ENCODE measurements at regions of chr3 and their contacts with region 1.

Region 1: DNA sequence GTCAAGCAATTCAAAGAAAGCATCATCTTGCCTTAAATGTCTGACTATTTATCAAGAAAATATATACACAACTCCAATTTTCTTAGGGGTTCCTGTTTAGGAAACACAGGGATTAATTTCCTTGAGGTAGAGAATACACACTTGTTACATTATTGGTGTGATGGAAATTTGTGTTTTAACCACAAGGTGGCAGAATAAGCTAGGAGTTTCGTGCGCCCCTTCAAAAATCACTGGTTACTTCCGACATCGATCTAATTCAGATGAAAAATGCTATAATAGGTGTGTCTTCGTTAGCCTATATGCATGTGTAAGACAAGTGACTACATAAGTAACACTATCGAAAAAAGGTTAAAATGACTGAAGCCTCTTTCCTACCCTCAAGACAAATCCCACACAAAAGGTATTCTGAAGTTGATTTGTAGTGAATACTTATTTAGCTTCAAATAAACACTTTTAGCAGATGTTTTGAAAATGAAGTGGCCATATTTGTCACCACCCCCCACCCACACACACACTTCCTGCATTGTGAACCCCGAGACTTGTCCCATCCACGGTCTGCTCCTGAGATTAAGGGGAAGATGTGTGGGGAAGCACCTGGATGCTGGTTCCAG is 246.5 kb downstream of the ROBO1 start:
- DNase-seq: peak in 1 of 7 donors; percentile 3
- H3K4me3 ChIP-seq: no peak overlapping the region
- H3K27ac ChIP-seq: no peak overlapping the region
- H3K4me1 ChIP-seq: no peaks in the 10 kb centered on the region
- H3K27me3 ChIP-seq: no peaks in the 10 kb centered on the region
- CTCF ChIP-seq: peak; percentile 37 to 65 (median 48)
- POLR2A ChIP-seq: no peak

Region 2: DNA sequence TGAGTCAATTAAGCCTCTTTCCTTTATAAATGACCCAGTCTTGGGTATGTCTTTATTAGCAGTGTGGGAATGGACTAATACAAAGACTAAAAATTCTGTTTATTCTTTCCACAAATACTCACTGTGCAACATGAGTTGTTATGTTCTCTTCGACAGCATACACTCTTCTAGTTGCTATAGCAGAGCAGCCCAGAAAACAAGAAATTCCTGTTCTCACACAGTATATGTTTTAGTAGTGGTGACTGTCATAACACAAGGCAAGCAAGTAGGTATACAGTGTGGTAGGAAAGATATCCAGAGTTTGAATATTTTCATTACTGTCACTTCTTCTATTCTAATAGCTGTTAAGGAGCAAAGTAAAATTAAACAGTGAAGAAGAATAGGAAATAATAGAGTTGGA is 206.8 kb before region 1 on chr3:
- intact Hi-C with region 1: no loop called
- DNase-seq: no peak
- H3K4me3 ChIP-seq: no peak overlapping the region
- H3K27ac ChIP-seq: no peak overlapping the region
- H3K4me1 ChIP-seq: no peaks in the 10 kb centered on the region
- H3K27me3 ChIP-seq: no peaks in the 10 kb centered on the region
- CTCF ChIP-seq: no peak
- POLR2A ChIP-seq: no peak

Region 3: GRCh38 chr3:80688814-80689213 is 1167.5 kb after region 1 on chr3:
- intact Hi-C with region 1: loop called in 1 of 2 experiments (anchors 5 kb)
- DNase-seq: peak in 1 of 7 donors; percentile 19
- H3K4me3 ChIP-seq: no peak overlapping the region
- H3K27ac ChIP-seq: no peak overlapping the region
- H3K4me1 ChIP-seq: no peaks in the 10 kb centered on the region
- H3K27me3 ChIP-seq: no peaks in the 10 kb centered on the region
- CTCF ChIP-seq: peak in 5 of 6 experiments; percentile 14 to 54 (median 28)
- POLR2A ChIP-seq: no peak